ENCODE measurements at regions of chr11 and their contacts with region 1.

Region 1: GRCh38 chr11:13210424-13210823 is 67.2 kb upstream of the BMAL1 start:
- DNase-seq: peak; percentile 70
- H3K4me3 ChIP-seq: no peak overlapping the region
- H3K27ac ChIP-seq: no peak overlapping the region
- H3K4me1 ChIP-seq: peaks cover 24% of the 10 kb centered on the region
- H3K27me3 ChIP-seq: no peaks in the 10 kb centered on the region
- CTCF ChIP-seq: peak; percentile 51 to 52
- POLR2A ChIP-seq: no peak

Region 2: GRCh38 chr11:13174090-13174489 is 36.3 kb before region 1 on chr11:
- CTCF ChIA-PET with region 1: no interaction called
- POLR2A ChIA-PET with region 1: no interaction called
- dilution Hi-C with region 1: no loop called
- intact Hi-C with region 1: no loop called
- DNase-seq: no peak
- H3K4me3 ChIP-seq: no peak overlapping the region
- H3K27ac ChIP-seq: no peak overlapping the region
- H3K4me1 ChIP-seq: no peaks in the 10 kb centered on the region
- H3K27me3 ChIP-seq: peaks cover 14 to 19% of the 10 kb centered on the region in 2 experiments
- CTCF ChIP-seq: no peak
- POLR2A ChIP-seq: no peak

Region 3: DNA sequence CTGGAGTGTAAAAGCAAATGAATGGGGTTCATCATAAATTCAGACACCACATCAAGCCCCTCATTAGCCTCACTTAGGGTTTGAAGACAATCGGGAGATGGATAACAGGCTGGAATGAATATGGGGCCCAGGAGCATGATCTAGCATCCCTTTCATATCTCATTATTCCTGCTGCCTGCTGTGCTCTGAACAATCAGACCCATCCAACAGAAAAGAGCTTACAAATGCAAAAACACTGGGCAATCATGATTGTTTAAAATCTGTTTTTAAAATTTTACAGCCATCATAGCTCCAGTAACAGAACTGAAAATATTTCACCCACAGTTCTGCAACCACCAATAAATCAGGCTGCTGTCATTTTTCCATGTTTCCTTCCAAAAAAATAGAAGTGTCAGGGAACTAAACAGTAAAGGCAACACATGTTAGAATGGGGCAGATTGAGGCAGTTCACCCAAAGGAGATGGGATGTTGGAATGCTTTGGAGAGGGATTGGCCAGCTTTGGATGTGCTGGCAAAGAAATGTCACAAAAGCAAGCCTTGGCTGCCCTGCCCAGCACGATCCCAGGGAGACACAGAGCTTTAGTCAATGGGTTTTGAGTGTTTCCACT is 19.4 kb after region 1 on chr11:
- CTCF ChIA-PET with region 1: interaction called, 170 read pairs
- POLR2A ChIA-PET with region 1: no interaction called
- dilution Hi-C with region 1: no loop called
- intact Hi-C with region 1: no loop called
- DNase-seq: no peak
- H3K4me3 ChIP-seq: no peak overlapping the region
- H3K27ac ChIP-seq: no peak overlapping the region
- H3K4me1 ChIP-seq: no peaks in the 10 kb centered on the region
- H3K27me3 ChIP-seq: peaks cover 20 to 27% of the 10 kb centered on the region in 2 experiments
- CTCF ChIP-seq: no peak
- POLR2A ChIP-seq: no peak

Region 4: GRCh38 chr11:13261591-13262061 is 51.2 kb after region 1 on chr11:
- CTCF ChIA-PET with region 1: interaction called, 11 read pairs
- POLR2A ChIA-PET with region 1: no interaction called
- dilution Hi-C with region 1: no loop called
- intact Hi-C with region 1: no loop called
- DNase-seq: peak; percentile 68
- H3K4me3 ChIP-seq: peak overlapping the region in 1 of 3 experiments; percentile 13
- H3K27ac ChIP-seq: peak overlapping the region; percentile 82
- H3K4me1 ChIP-seq: peaks cover 35% of the 10 kb centered on the region
- H3K27me3 ChIP-seq: no peaks in the 10 kb centered on the region
- CTCF ChIP-seq: no peak
- POLR2A ChIP-seq: peak; percentile 24

Region 5: GRCh38 chr11:13335319-13335718 is 124.9 kb after region 1 on chr11:
- CTCF ChIA-PET with region 1: interaction called, 136 read pairs
- POLR2A ChIA-PET with region 1: no interaction called
- dilution Hi-C with region 1: no loop called
- intact Hi-C with region 1: loop called (anchors 1 kb)
- DNase-seq: peak; percentile 61
- H3K4me3 ChIP-seq: no peak overlapping the region
- H3K27ac ChIP-seq: no peak overlapping the region
- H3K4me1 ChIP-seq: peaks cover 27% of the 10 kb centered on the region
- H3K27me3 ChIP-seq: no peaks in the 10 kb centered on the region
- CTCF ChIP-seq: peak; percentile 82 to 91
- POLR2A ChIP-seq: no peak

Region 6: GRCh38 chr11:13354335-13354734 is 143.9 kb after region 1 on chr11:
- CTCF ChIA-PET with region 1: interaction called, 40 read pairs
- POLR2A ChIA-PET with region 1: no interaction called
- dilution Hi-C with region 1: no loop called
- intact Hi-C with region 1: no loop called
- DNase-seq: peak; percentile 44
- H3K4me3 ChIP-seq: no peak overlapping the region
- H3K27ac ChIP-seq: no peak overlapping the region
- H3K4me1 ChIP-seq: no peaks in the 10 kb centered on the region
- H3K27me3 ChIP-seq: no peaks in the 10 kb centered on the region
- CTCF ChIP-seq: peak; percentile 45 to 46
- POLR2A ChIP-seq: no peak

Region 7: GRCh38 chr11:13462901-13463778 is 252.7 kb after region 1 on chr11 and contains the start of gene BTBD10:
- CTCF ChIA-PET with region 1: interaction called, 21 read pairs
- POLR2A ChIA-PET with region 1: no interaction called
- dilution Hi-C with region 1: no loop called
- intact Hi-C with region 1: loop called (anchors 2 kb)
- DNase-seq: peak; percentile 97
- H3K4me3 ChIP-seq: peak within 1 kb of the TSS; percentile 13 to 76 (median 70)
- H3K27ac ChIP-seq: peak within 1 kb of the TSS; percentile 60
- H3K4me1 ChIP-seq: peaks cover 26% of the 10 kb centered on the region
- H3K27me3 ChIP-seq: peaks cover 2 to 6% of the 10 kb centered on the region in 2 experiments
- CTCF ChIP-seq: no peak
- POLR2A ChIP-seq: peak; percentile 86
- total RNA-seq, gene BTBD10: 49.6 and 54.8 TPM in 2 replicates

Measured in endothelial cell of umbilical vein (primary cell).